Mucosa of descending colon (tissue), 3 donors: ENCODE measurements at regions of chr11 and their contacts with region 1.

Region 1: DNA sequence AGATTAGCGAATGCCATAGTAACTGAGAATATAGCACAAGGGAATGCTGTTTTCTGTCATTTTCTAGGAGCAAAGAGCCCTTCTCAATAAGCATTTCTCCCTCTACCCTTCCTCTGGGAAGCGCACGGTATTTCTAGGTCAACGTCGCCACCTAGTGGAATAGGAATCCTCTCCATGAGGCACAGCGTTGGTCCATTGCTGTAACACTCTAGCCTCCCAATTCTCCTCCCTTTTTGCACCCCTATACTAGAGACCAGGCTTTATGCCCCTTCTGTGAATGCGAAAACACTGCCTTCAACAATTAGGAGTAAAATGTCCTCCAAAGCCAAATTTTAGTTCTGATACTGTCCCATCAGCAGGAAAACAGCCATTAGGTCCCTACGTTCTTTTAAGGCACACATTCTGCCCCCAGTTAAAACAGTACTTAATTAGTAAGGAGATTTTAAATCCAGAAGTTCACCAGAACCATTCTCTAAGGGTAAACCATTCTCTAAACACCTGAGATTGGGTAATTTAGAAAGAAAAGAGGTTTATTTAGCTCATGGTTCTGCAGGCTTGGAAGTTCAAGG is 12.8 kb upstream of the HYLS1 start:
- DNase-seq: peak in 1 of 3 donors; percentile 83
- ATAC-seq: peak; percentile 78
- H3K4me3 ChIP-seq: no peak overlapping the region
- H3K4me1 ChIP-seq: no peaks in the 10 kb centered on the region
- CTCF ChIP-seq: peak; percentile 42

Region 2: GRCh38 chr11:125519860-125520834 is 354.5 kb before region 1 on chr11:
- intact Hi-C with region 1: loop called in 1 of 2 experiments (anchors 5 kb)
- DNase-seq: no peak
- ATAC-seq: no peak
- H3K4me3 ChIP-seq: no peak overlapping the region
- H3K4me1 ChIP-seq: no peaks in the 10 kb centered on the region
- CTCF ChIP-seq: no peak